Mammary epithelial cell (primary cell): ENCODE measurements at regions of chr6 and their contacts with region 1.

Region 1: DNA sequence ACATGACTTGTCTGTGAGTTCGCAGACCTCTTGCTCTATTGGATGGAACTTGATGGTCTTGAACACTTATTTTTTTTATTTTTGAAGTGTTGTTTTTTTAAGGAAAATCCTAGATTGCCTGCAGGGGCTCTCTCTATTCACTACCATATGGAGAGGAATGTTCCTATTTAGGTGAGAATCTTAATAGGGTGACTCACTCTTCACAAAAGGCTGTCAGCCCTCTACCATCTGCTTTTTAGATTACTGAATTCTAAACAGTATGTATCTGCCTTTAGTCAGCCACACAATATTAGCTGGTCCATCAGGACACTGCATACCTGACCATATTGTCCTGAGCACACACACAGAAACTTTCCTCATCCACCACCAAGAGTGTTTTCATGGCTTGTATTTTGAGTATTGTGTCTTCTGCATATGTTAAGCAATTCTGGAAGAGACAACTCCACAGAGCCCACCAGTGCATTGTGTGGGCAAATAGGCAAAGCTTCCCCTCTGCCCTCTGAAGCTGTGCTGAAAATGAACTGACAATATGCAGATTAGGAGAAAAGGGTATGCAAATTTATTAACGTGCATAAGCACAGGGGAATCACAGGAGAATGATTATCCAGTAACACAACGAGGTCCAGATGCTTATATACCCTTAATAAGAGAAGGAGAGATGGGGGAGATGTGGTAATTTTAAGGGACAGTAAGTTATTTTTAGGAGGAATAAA is 6.6 kb upstream of the BTBD9 start:
- DNase-seq: peak; percentile 12
- H3K4me3 ChIP-seq: no peak overlapping the region
- H3K27ac ChIP-seq: no peak overlapping the region
- H3K4me1 ChIP-seq: no peaks in the 10 kb centered on the region
- H3K27me3 ChIP-seq: no peaks in the 10 kb centered on the region
- CTCF ChIP-seq: no peak

Region 2: DNA sequence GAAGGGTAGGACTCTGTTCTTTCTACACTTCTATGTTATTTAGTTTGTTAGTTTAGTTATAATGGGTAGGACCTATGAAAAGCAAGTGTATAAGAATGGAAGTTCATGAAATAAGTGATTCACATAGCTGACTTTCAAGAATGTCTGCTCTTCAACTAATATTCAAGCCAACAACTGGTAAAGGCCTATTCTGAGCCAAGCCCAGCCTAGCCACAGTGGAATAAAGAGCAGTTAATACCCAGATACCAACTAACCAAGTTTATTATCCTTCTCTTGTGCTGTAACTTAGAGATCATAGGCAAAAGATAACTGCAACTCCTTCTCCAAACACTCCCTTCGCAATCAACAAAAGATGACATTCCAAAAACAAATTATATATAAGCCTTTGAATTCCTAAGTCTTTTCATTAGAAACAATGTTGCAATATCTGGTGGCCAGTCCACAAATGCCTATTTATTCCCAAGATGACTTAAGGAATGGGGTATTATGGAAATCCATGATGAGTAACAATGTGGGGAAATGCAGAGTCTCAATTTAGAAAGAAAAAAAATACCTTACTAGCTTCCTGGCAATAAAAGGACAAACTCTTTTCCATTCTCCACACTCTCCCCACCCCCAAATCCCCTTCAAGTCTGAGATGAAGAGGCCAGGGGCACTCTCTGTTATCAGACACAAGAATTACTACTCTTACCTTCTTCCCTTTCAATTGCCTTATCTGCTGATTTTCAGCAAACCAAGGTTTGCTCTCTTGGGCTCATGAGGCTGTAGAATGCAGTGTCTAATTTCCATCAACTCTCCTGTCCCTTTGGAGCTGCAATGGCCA is 34.0 kb before region 1 on chr6:
- CTCF ChIA-PET with region 1: no interaction called
- dilution Hi-C with region 1: loop called (anchors 5 kb)
- in situ Hi-C with region 1: no loop called
- intact Hi-C with region 1: no loop called
- DNase-seq: peak; percentile 10
- H3K4me3 ChIP-seq: no peak overlapping the region
- H3K27ac ChIP-seq: no peak overlapping the region
- H3K4me1 ChIP-seq: peaks cover 7% of the 10 kb centered on the region
- H3K27me3 ChIP-seq: no peaks in the 10 kb centered on the region
- CTCF ChIP-seq: no peak